Right cardiac atrium (tissue), 5 donors: ENCODE measurements at regions of chr15 and their contacts with region 1.

Region 1: GRCh38 chr15:50855092-50855396 is 53.4 kb upstream of the AP4E1 start:
- DNase-seq: no peak
- ATAC-seq: no peak
- H3K4me3 ChIP-seq: no peak overlapping the region
- H3K27ac ChIP-seq: no peak overlapping the region
- H3K4me1 ChIP-seq: no peaks in the 10 kb centered on the region
- H3K27me3 ChIP-seq: no peaks in the 10 kb centered on the region

Region 2: GRCh38 chr15:50670115-50670514 is 184.9 kb before region 1 on chr15:
- intact Hi-C with region 1: no loop called
- DNase-seq: no peak
- ATAC-seq: no peak
- H3K4me3 ChIP-seq: no peak overlapping the region
- H3K27ac ChIP-seq: no peak overlapping the region
- H3K4me1 ChIP-seq: peaks cover 1% of the 10 kb centered on the region
- H3K27me3 ChIP-seq: no peaks in the 10 kb centered on the region

Region 3: DNA sequence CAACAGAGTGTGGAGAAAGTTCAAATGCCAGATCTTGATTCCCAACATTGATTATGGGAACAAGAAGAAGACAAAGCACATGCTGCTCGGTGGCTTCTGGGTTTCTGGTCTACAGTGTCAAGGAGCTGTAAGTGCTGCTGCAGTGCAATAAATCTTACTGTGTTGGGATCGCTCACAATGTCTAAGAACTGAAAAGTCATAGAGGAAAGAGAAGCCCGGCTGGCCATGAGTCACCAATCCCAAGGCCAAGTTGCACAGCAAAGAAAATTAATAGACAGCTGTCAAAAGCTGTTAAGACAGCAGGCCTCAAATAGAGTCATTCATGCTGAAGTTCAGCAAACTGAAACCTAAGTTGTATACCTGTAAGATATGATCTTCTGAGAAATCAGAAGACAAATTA is 56.4 kb before region 1 on chr15:
- intact Hi-C with region 1: loop called in 1 of 4 experiments (anchors 10 kb)
- DNase-seq: no peak
- ATAC-seq: no peak
- H3K4me3 ChIP-seq: no peak overlapping the region
- H3K27ac ChIP-seq: no peak overlapping the region
- H3K4me1 ChIP-seq: no peaks in the 10 kb centered on the region
- H3K27me3 ChIP-seq: no peaks in the 10 kb centered on the region